ENCODE measurements at regions of chr12 and their contacts with region 1.

Region 1: DNA sequence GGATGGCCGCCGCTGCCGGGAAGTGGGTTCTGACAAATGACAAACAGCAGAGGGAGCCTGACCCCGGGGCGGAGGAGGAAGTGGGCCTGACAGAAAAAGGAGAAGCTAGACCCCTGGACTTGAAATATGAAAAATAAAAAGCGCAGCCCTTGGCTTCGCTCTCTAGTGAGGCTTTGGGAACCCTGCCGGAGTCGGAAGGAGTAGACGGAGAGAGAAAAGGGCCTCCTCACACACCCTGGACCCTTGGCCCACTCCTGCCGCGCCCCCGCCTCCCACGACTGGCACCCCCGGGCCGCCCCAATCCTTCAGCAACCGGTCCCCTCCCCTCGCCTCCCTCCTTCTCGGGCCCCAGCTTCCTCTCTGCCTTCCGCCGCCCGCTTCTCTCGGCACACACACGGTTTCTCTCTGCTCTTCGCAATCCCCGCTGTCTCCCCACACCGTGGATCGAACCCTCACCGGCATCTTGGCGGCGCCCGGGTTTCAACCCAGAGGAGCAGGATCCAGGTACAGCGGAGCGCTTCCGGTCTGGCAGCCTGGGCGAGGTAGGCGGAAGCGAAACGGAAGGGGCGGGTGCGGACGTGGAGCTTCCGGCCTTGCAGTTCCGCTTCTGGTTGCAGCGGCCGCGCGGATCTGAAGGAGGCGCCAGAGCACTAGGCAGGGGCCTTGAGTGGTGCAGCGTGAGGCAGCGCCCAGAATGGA is at the start of gene ARPC3:
- DNase-seq: peak; percentile 98
- H3K4me3 Mint-ChIP-seq: peak within 1 kb of the TSS; percentile 100
- H3K27ac Mint-ChIP-seq: peak within 1 kb of the TSS; percentile 100
- H3K4me1 Mint-ChIP-seq: peaks cover 37% of the 10 kb centered on the region
- H3K27me3 Mint-ChIP-seq: no peaks in the 10 kb centered on the region
- total RNA-seq, gene ARPC3: 285 and 300 TPM in 2 replicates

Region 2: GRCh38 chr12:110431957-110432587 is 17.9 kb before region 1 on chr12:
- intact Hi-C with region 1: loop called (anchors 2 kb)
- DNase-seq: peak; percentile 66
- H3K4me3 Mint-ChIP-seq: peak overlapping the region; percentile 94
- H3K27ac Mint-ChIP-seq: no peak overlapping the region
- H3K4me1 Mint-ChIP-seq: peaks cover 7% of the 10 kb centered on the region
- H3K27me3 Mint-ChIP-seq: peaks cover 3% of the 10 kb centered on the region

Region 3: GRCh38 chr12:110468212-110469048 is 18.5 kb after region 1 on chr12 and contains the starts of genes FAM216A and GPN3:
- intact Hi-C with region 1: loop called (anchors 1 kb)
- DNase-seq: peak; percentile 99
- H3K4me3 Mint-ChIP-seq: peak within 1 kb of the TSS; percentile 89
- H3K27ac Mint-ChIP-seq: peak within 1 kb of the TSS; percentile 95
- H3K4me1 Mint-ChIP-seq: peaks cover 32% of the 10 kb centered on the region
- H3K27me3 Mint-ChIP-seq: no peaks in the 10 kb centered on the region
- total RNA-seq, gene FAM216A: 53.7 and 54.4 TPM in 2 replicates
- total RNA-seq, gene GPN3: 60.0 and 62.8 TPM in 2 replicates

Region 4: DNA sequence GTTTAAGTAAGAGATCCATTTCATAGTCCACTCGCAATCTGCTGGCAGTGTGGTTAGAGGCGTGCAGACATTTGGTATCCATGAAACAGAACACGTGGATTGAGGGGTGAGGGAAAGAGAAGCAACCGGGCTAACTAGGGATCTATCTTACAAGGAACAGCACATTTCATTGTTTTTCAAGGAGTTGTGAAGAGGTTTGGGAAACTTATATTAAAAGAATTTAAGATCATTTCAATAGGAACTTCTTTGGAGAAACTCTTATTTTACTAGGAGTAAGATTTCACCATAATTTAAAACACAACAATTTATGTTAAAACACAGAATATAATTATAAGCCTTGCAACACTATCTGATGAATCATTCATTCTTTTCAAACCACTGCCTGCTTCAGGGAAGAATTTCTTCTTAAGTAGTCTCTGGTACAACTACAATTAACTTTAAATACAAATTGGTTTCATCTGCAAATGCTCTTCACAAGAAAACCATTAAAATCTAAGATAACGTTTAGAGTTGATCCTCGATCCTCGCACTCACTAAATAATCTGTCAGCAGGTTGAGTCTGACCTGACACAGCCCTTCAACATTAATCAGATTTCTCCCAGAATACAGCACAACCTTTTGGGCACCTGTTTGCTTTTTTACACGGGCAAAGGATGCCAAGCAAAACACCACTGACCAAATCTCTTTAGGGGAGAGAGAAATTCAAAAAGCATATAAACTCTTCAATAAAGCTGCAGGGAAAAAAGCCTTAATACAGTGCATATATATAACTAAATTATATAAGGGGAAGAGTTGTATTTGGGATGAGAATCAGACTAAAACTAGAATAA is 105.8 kb after region 1 on chr12:
- intact Hi-C with region 1: no loop called
- DNase-seq: no peak
- H3K4me3 Mint-ChIP-seq: no peak overlapping the region
- H3K27ac Mint-ChIP-seq: no peak overlapping the region
- H3K4me1 Mint-ChIP-seq: peaks cover 33% of the 10 kb centered on the region
- H3K27me3 Mint-ChIP-seq: no peaks in the 10 kb centered on the region

Region 5: DNA sequence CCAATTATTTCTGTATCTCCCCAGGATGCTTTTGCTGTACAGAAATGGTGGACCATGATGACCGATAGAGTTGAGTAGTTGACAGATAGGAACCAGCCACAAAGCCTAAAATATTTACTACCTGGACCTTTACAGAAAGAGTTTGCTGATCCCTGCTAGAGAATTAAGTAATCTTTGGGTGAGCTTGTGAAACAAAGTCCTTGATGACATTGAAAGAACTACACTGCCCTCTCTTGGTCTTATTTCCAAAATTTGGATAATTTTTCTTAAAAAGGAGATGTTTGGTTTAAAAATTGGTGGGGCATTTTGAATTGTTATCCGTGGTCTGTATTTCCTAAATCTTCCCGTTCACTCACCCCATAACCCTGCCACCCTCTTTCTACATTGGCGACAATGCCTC is 150.3 kb after region 1 on chr12:
- intact Hi-C with region 1: loop called (anchors 1 kb)
- DNase-seq: peak; percentile 67
- H3K4me3 Mint-ChIP-seq: no peak overlapping the region
- H3K27ac Mint-ChIP-seq: no peak overlapping the region
- H3K4me1 Mint-ChIP-seq: peaks cover 13% of the 10 kb centered on the region
- H3K27me3 Mint-ChIP-seq: no peaks in the 10 kb centered on the region

Region 6: GRCh38 chr12:110698171-110698902 is 248.4 kb after region 1 on chr12:
- intact Hi-C with region 1: loop called (anchors 1 kb)
- DNase-seq: peak; percentile 95
- H3K4me3 Mint-ChIP-seq: no peak overlapping the region
- H3K27ac Mint-ChIP-seq: peak overlapping the region; percentile 88
- H3K4me1 Mint-ChIP-seq: peaks cover 12% of the 10 kb centered on the region
- H3K27me3 Mint-ChIP-seq: no peaks in the 10 kb centered on the region

Measured in activated CD4-positive, alpha-beta T cell treated with anti-CD3 and anti-CD28 coated beads, Interleukin-2, amount 10 ng/mL, durations not matched to agents 24 days and 14 days (primary cell).